Left cardiac atrium (tissue), 4 donors: ENCODE measurements at regions of chr22 and their contacts with region 1.

Region 1: DNA sequence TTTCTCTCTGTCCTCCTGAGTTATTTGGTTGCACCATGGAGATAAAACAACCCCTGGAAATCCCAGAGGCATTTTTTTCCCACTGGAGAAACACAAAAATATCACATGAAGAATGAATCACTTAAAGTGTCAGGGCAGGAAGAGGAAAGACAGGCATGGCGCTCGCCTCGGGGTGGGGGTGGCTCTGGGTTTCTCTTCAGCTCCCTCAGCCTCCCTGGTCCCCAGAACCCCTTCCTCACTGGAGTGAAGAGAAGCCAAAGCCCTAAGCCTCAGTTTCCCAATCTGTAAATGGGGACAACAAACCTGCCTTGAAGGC is 938 bp downstream of the SHISAL1 start:
- DNase-seq: no peak
- ATAC-seq: no peak

Region 2: GRCh38 chr22:44259366-44260215 is 52.2 kb before region 1 on chr22:
- intact Hi-C with region 1: loop called in 1 of 2 experiments (anchors 10 kb)
- DNase-seq: no peak
- ATAC-seq: no peak

Region 3: GRCh38 chr22:44293876-44294275 is 17.9 kb before region 1 on chr22:
- intact Hi-C with region 1: loop called in 1 of 2 experiments (anchors 2 kb)
- DNase-seq: no peak
- ATAC-seq: no peak

Region 4: DNA sequence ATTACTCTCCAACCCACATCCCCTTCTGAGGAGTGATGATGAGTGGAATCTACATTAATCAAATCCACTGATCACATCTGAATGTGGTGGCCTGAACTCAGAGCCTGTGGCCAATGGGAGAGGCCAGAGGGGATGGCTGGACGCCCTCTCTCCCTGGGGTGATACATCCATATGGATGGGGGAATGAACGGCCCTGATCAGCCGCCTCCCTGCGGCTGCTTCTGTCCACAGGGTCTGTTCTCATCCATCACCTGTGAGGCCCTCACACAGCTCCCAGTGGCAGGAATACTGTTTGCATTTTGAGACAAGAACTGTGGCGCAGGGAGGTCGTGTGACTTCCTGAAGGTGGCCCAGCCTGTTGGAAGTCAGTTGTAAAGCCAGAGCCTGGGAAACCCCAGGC is 79.2 kb after region 1 on chr22:
- intact Hi-C with region 1: no loop called
- DNase-seq: no peak
- ATAC-seq: no peak

Region 5: GRCh38 chr22:44625981-44626687 is 314.3 kb after region 1 on chr22:
- intact Hi-C with region 1: loop called in 1 of 2 experiments (anchors 10 kb)
- DNase-seq: peak; percentile 75
- ATAC-seq: peak; percentile 75 to 81

Region 6: DNA sequence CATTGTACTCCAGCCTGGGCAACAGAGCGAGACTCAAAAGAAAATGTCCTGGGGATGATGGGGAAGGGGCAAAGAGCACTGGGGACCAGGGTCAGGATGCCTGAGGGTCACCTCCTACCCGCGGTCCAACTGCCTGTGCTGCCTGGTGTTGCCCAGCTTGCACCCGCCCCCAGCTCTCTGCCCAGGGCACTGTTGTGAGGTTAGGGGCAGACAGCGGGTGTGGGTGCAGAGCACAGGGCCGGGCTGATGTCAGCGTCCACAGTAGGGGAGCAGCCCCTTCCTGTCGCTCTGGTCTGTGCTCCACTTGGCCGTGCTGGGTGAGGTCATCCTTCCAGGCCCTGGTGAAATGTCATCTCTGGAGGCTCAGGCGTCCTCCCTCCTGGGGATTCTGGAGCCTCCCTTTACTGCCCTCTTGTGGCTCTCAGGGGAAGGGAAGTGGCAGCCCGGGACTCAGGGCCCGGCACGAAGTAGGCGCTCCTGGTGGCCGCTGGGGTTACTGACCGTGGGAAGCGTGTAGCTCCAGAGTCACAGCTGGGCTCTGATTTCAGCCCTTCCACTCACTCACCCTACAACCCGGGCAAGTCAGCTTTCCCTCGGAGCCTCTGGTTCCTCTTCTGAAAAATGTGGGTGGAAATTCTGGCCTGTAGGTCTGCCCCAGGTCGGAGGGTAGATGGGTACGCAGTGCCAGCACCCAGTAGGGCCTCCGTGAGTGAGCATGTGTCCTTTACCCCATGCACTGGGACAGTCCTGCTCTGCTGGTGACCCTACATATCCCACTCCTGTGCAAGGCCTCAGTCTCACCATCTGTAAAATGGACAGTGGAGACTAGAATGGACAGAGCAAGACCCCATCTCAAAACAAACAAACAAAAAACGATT is 372.9 kb after region 1 on chr22:
- intact Hi-C with region 1: no loop called
- DNase-seq: peak; percentile 88
- ATAC-seq: peak; percentile 88 to 92